H1 (cell line): ENCODE measurements at regions of chr20 and their contacts with region 1.

Region 1: DNA sequence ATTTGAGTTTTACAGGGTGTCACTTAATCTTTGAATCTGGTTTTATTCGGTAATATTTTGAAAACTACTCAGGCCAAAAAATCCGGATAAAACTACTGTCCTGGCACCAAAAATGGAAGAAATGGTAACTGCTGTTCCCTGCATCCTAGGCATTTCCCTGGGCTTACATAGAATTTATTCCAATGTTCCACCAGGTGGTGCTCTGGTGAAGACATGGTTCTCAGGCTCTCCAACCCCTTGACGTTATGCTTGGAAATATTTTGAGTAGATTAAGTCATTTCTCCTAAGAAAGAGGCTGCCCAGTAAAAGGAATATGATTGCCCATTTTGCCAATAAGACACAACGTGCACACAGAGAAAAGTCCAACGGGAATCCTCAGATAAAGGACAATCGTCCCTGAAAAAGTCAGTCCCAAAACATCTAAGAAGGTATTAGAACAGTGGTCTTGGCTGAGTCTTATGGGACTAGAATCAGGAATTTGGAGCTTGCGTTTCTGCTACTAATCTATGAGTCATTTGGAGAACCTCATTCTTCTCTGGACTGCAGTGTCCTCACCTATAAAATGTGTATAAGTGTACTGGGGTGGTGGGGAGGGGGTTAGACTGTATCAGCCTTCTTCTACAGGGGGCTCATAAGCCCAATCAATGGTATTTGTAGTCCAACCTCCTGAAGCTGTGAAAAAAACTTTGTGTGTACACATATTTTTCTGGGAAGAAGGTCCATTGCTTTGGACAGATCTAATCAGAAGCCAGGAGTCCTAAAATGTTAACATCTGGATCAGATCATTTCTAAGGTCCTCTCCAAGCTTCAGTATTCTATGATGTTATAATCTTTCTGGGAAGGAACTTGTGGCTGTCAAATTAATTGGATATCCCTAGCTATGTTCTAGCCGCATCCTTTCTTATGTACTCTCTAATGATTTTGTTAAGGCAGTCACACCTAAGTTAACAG is 131.0 kb upstream of the BMP2 start:
- DNase-seq: no peak
- H3K4me3 ChIP-seq: no peak overlapping the region
- H3K27ac ChIP-seq: no peak overlapping the region
- H3K4me1 ChIP-seq: peaks cover 0 to 4% (median 1%) of the 10 kb centered on the region in 4 experiments; a peak in 2 of 7 replicates
- H3K27me3 ChIP-seq: no peaks in the 10 kb centered on the region
- CTCF ChIP-seq: peak in 2 of 3 experiments; percentile 55 to 66; a peak in 3 of 4 replicates
- EP300 ChIP-seq: no peak
- POLR2A ChIP-seq: no peak
- RAD21 ChIP-seq: peak; percentile 72 to 74

Region 2: DNA sequence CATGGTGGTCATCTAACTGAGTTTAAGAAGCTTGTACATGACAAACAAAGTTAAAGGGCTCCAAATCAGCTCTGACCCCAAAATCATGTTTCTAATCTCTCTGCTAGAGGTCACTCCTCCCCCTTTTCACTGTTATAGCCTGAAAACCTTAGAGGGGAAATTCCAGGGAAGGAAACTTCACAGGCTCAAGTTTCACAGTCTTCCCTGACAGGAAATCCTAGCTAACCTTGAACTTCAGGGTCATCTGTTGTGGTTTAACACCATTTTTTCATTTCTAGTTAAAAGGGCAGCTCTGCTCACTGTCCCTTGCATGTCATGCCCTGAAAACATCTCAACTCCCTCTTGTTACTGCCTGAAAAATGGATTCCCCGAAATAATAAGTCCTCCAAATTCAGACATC is 26.6 kb after region 1 on chr20:
- CTCF ChIA-PET with region 1: interaction called, 12 read pairs
- POLR2A ChIA-PET with region 1: no interaction called
- DNase-seq: no peak
- H3K4me3 ChIP-seq: no peak overlapping the region
- H3K27ac ChIP-seq: no peak overlapping the region
- H3K4me1 ChIP-seq: 0 out of 7 replicates have a peak, but pooled peaks cover 0 to 5% (median 0%) of the 10 kb centered on the region in 4 experiments
- H3K27me3 ChIP-seq: no peaks in the 10 kb centered on the region
- CTCF ChIP-seq: no peak
- EP300 ChIP-seq: no peak
- POLR2A ChIP-seq: no peak
- RAD21 ChIP-seq: no peak

Region 3: DNA sequence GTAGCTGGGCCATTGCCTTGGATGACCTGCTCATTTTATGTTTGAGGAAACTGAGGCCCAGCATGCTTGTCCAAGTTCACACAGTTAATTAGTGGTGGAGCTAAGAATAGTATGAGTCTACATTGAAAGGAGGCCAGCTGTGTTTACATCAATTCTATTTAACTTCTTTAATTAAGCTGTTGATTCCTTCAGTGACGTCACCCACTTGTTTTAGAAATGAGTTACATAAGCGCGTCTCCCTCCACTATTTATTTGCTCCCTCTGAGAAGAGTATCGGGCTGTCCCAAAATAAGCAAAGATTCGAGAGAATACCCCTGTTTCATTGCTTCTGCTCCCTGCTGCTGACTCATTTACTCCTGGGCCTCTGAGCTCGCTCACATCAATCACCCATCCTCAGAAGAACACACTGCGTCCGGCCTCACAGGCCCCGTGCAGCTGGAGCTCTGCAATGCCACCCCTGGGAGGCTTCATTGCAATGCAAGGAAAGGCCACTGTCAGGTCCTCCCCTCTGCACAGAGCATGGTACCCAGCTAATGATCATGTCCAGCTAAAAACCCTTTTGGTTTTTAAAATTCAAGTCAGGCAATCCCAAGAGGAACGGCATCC is 56.2 kb after region 1 on chr20:
- CTCF ChIA-PET with region 1: interaction called, 10 read pairs
- POLR2A ChIA-PET with region 1: no interaction called
- DNase-seq: no peak
- H3K4me3 ChIP-seq: no peak overlapping the region
- H3K27ac ChIP-seq: no peak overlapping the region
- H3K4me1 ChIP-seq: peaks cover 0 to 2% (median under 1%) of the 10 kb centered on the region in 4 experiments; a peak in 4 of 7 replicates
- H3K27me3 ChIP-seq: no peaks in the 10 kb centered on the region
- CTCF ChIP-seq: no peak
- EP300 ChIP-seq: no peak
- POLR2A ChIP-seq: no peak
- RAD21 ChIP-seq: no peak

Region 4: DNA sequence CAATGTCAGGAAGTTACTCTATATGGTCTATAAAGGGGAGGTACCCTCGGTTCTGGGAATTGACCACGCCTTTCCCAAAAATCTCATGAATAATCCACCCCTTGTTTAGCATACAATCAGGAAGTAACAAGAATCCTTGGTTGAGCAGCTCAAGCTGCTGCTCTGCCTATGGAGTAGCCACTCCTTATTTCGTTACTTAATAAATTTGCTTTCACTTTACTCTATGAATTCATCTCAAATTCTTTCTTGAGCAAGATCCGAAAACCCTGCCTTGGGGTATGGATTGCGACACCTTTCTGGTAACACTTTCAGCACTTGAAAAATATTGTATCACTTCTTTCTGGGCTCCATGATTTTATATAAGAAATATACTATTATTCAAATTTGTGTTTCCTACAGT is 374.1 kb after region 1 on chr20:
- CTCF ChIA-PET with region 1: no interaction called
- POLR2A ChIA-PET with region 1: no interaction called
- DNase-seq: no peak
- H3K4me3 ChIP-seq: no peak overlapping the region
- H3K27ac ChIP-seq: no peak overlapping the region
- H3K4me1 ChIP-seq: no peaks in the 10 kb centered on the region
- H3K27me3 ChIP-seq: no peaks in the 10 kb centered on the region
- CTCF ChIP-seq: no peak
- EP300 ChIP-seq: no peak
- POLR2A ChIP-seq: no peak
- RAD21 ChIP-seq: no peak